ENCODE measurements at regions of chr20 and their contacts with region 1.

Region 1: GRCh38 chr20:31630187-31630790 is 7.4 kb upstream of the COX4I2 start:
- DNase-seq: no peak
- ATAC-seq: no peak
- H3K4me3 ChIP-seq: no peak overlapping the region
- H3K27ac ChIP-seq: no peak overlapping the region
- H3K4me1 ChIP-seq: no peaks in the 10 kb centered on the region
- H3K27me3 ChIP-seq: no peaks in the 10 kb centered on the region
- CTCF ChIP-seq: no peak

Region 2: DNA sequence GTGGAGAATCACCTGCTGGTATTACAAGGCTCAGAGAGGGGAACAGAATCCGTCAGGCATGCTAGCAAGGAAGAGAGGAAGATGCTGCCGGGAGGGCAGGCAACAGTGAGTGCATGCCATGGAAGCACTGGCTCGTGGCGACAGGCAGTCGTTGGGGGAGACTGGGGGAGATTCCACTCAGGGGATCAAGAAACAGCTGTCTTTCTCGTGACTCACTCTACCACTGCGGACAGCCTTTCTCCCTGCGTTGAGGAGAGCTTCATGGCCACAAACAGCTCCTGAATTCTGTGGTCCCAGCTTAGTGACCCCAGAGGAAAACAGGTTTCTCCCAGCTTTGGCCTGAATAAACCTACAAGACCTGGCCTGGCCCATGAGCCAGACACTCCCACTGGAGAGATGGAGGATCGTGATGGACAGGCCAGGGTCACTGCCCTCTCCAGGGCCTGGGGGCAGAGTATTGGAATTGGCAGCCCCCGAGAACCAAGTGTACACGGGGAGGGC is 78.7 kb before region 1 on chr20:
- CTCF ChIA-PET with region 1: no interaction called
- POLR2A ChIA-PET with region 1: no interaction called
- in situ Hi-C with region 1: no loop called
- intact Hi-C with region 1: no loop called
- DNase-seq: no peak
- ATAC-seq: no peak
- H3K4me3 ChIP-seq: no peak overlapping the region
- H3K27ac ChIP-seq: no peak overlapping the region
- H3K4me1 ChIP-seq: peaks cover 3% of the 10 kb centered on the region; the same call in 1 of the 2 replicates
- H3K27me3 ChIP-seq: no peaks in the 10 kb centered on the region
- CTCF ChIP-seq: no peak

Region 3: DNA sequence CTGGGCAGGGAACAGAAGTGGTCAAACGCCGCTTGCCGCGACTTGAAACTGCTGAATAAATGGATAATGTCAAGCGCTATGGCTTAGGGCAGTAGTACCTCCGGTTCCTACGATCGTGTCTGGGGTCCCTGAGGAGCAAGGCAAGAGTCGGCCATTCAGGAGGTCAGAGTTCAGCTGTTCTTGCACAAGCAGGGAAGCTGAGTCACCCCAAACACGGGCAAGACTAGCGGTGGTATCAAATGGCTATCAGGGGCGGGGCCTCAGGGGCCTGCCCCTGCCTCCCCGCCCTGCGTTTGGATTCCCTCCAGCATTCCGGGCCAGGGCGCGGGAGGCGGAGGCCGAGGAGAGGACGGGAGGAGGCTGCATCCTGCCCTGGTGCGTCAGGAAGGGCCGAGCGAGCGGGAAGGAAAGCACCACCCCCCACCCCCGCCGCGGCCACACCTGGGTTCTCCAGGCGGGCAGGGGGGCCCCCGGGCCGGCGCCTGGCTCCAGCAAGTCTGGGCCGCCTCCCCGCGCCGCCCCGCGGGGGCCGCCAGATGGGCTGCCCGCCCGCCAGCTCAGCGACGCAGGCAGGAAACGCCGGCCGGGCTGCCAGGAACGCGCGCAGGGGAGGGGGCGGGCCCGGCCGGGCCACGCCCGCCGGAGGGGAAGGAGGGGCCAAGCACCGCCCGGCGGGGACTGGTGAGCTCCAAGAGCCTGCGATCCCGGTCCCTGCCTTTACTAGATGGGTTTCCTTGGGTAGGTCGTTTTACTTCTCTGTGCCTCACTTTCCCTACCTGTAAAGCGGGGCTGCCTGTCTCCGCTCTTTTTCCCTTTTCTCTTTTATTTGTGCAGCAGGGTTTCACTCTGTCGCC is 57.4 kb before region 1 on chr20:
- CTCF ChIA-PET with region 1: interaction called, 6 read pairs
- POLR2A ChIA-PET with region 1: interaction called, 10 read pairs
- in situ Hi-C with region 1: loop called (anchors 10 kb)
- intact Hi-C with region 1: no loop called
- DNase-seq: peak; percentile 98
- ATAC-seq: peak; percentile 86
- H3K4me3 ChIP-seq: peak overlapping the region; percentile 54 to 75
- H3K27ac ChIP-seq: peak overlapping the region; percentile 99
- H3K4me1 ChIP-seq: peaks cover 56% of the 10 kb centered on the region
- H3K27me3 ChIP-seq: no peaks in the 10 kb centered on the region
- CTCF ChIP-seq: no peak

Region 4: GRCh38 chr20:31595654-31596411 is 34.5 kb before region 1 on chr20:
- CTCF ChIA-PET with region 1: no interaction called
- POLR2A ChIA-PET with region 1: no interaction called
- in situ Hi-C with region 1: no loop called
- intact Hi-C with region 1: no loop called
- DNase-seq: no peak
- ATAC-seq: peak; percentile 74
- H3K4me3 ChIP-seq: peak overlapping the region; percentile 48 to 73
- H3K27ac ChIP-seq: peak overlapping the region; percentile 97
- H3K4me1 ChIP-seq: peaks cover 50% of the 10 kb centered on the region
- H3K27me3 ChIP-seq: no peaks in the 10 kb centered on the region
- CTCF ChIP-seq: no peak

Region 5: DNA sequence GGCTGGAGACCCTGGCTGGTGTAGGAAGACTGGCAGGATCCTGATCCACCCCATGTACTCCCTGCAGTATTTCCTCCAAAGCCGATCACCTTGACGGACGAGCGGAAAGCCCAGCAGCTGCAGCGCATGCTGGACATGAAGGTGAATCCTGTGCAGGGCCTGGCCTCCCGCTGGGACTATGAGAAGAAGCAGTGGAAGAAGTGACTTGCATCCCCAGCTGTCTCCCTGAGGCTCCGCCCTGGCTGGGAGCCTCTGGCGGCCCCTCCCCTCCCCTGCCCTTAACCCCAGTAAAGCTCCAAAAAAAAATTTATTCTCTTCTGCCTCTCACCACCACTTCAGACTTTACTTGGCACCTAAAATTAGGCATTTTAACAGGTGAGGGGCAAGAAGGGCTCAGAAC is 14.4 kb after region 1 on chr20:
- CTCF ChIA-PET with region 1: interaction called, 16 read pairs
- POLR2A ChIA-PET with region 1: interaction called, 7 read pairs
- in situ Hi-C with region 1: no loop called
- intact Hi-C with region 1: no loop called
- DNase-seq: no peak
- ATAC-seq: no peak
- H3K4me3 ChIP-seq: no peak overlapping the region
- H3K27ac ChIP-seq: no peak overlapping the region
- H3K4me1 ChIP-seq: no peaks in the 10 kb centered on the region
- H3K27me3 ChIP-seq: no peaks in the 10 kb centered on the region
- CTCF ChIP-seq: no peak

Region 6: GRCh38 chr20:31661625-31662371 is 31.5 kb after region 1 on chr20:
- CTCF ChIA-PET with region 1: interaction called, 26 read pairs
- POLR2A ChIA-PET with region 1: interaction called, 14 read pairs
- in situ Hi-C with region 1: no loop called
- intact Hi-C with region 1: no loop called
- DNase-seq: peak; percentile 74
- ATAC-seq: peak; percentile 81
- H3K4me3 ChIP-seq: peak overlapping the region; percentile 27 to 64
- H3K27ac ChIP-seq: peak overlapping the region; percentile 78
- H3K4me1 ChIP-seq: peaks cover 40% of the 10 kb centered on the region
- H3K27me3 ChIP-seq: no peaks in the 10 kb centered on the region
- CTCF ChIP-seq: peak; percentile 98

Region 7: GRCh38 chr20:31691646-31692275 is 61.5 kb after region 1 on chr20:
- CTCF ChIA-PET with region 1: interaction called, 10 read pairs
- POLR2A ChIA-PET with region 1: no interaction called
- in situ Hi-C with region 1: no loop called
- intact Hi-C with region 1: no loop called
- DNase-seq: no peak
- ATAC-seq: no peak
- H3K4me3 ChIP-seq: no peak overlapping the region
- H3K27ac ChIP-seq: no peak overlapping the region
- H3K4me1 ChIP-seq: peaks cover 37% of the 10 kb centered on the region
- H3K27me3 ChIP-seq: no peaks in the 10 kb centered on the region
- CTCF ChIP-seq: no peak

Region 8: DNA sequence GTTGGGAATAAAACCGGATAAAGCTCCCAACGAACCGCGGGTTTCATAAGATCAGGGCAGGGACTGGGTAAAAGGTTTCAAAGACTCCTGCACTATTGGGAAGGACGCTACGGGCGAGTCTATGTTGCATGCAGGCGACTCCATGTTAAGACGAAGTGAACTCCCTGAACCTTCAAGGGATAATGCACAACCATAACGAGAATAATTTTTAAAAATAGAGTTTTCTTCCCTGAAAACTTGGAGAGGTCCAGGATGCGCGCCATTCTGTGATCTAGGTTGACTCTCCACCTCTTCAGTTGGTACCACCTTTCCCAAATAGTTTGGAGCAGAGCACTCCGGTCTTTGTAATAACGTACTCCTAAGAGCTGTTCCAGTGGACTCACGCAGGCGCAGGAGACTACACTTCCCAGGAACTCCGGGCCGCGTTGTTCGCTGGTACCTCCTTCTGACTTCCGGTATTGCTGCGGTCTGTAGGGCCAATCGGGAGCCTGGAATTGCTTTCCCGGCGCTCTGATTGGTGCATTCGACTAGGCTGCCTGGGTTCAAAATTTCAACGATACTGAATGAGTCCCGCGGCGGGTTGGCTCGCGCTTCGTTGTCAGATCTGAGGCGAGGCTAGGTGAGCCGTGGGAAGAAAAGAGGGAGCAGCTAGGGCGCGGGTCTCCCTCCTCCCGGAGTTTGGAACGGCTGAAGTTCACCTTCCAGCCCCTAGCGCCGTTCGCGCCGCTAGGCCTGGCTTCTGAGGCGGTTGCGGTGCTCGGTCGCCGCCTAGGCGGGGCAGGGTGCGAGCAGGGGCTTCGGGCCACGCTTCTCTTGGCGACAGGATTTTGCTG is 108.7 kb after region 1 on chr20 and contains the start of gene TPX2:
- CTCF ChIA-PET with region 1: no interaction called
- POLR2A ChIA-PET with region 1: interaction called, 16 read pairs
- in situ Hi-C with region 1: no loop called
- intact Hi-C with region 1: no loop called
- DNase-seq: peak; percentile 100
- ATAC-seq: peak; percentile 99
- H3K4me3 ChIP-seq: peak within 1 kb of the TSS; percentile 71 to 79
- H3K27ac ChIP-seq: peak within 1 kb of the TSS; percentile 99
- H3K4me1 ChIP-seq: peaks cover 24% of the 10 kb centered on the region
- H3K27me3 ChIP-seq: no peaks in the 10 kb centered on the region
- CTCF ChIP-seq: no peak
- total RNA-seq, gene TPX2: 248 TPM

Region 9: DNA sequence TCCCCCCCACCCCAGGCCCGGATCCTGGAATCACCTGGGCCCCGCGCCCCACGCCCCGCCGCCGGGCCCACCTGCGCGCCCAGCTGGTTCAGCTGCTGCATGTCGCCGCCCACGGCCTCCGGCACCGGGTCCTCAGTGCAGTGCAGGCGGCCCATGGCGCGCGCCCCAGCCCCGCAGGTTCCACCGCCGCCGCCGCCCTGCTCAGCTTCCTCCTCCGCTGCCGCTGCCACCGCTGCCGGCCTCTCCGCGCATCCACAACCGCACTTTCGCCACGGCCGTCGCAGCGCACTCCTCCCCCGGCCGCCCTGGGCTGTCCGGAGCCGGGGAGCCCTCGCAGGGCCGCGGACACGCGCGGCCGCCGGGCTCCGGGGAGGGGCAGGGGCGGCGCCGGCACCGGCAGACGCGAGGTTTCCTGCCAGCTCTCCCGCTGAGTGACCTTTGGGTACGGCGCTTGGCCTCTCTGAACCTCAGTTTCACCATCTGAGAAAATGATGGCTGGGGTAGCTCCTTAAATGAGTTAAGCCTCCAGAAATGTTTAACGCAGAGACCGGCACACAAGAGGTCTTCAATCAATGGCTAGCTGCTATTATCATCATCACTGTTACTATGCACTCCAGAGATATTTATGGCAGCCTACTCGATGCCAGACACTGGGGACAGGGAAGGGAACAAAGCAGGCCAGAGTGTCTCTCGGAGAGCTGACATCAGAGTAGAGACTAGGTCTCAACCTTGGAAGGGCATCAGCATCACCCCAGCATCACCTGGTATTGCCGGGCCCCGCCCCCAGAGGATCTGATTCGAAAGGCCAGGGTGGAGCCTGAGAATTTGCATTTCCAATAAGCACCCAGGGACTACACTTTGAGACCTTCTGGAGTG is 1113.2 kb after region 1 on chr20 and contains the start of gene COMMD7:
- CTCF ChIA-PET with region 1: no interaction called
- POLR2A ChIA-PET with region 1: no interaction called
- in situ Hi-C with region 1: no loop called
- intact Hi-C with region 1: no loop called
- DNase-seq: no peak
- ATAC-seq: peak; percentile 78
- H3K4me3 ChIP-seq: peak within 1 kb of the TSS; percentile 57 to 63
- H3K27ac ChIP-seq: peak within 1 kb of the TSS; percentile 74
- H3K4me1 ChIP-seq: peaks cover 7% of the 10 kb centered on the region; the same call in 1 of the 2 replicates
- H3K27me3 ChIP-seq: no peaks in the 10 kb centered on the region
- CTCF ChIP-seq: no peak
- total RNA-seq, gene COMMD7: 24.8 TPM

Measured in Panc1 (cell line).